A673 (cell line): ENCODE measurements at regions of chr6 and their contacts with region 1.

Region 1: GRCh38 chr6:32993363-32993973 is 15.9 kb downstream of the HLA-DOA start:
- DNase-seq: no peak
- H3K4me3 ChIP-seq: no peak overlapping the region
- H3K27ac ChIP-seq: no peak overlapping the region
- H3K4me1 ChIP-seq: no peaks in the 10 kb centered on the region
- H3K27me3 ChIP-seq: peaks cover 10% of the 10 kb centered on the region
- CTCF ChIP-seq: no peak

Region 2: GRCh38 chr6:33241968-33242367 is 248.5 kb after region 1 on chr6:
- CTCF ChIA-PET with region 1: no interaction called
- POLR2A ChIA-PET with region 1: interaction called, 13 read pairs
- intact Hi-C with region 1: no loop called
- DNase-seq: no peak
- H3K4me3 ChIP-seq: no peak overlapping the region
- H3K27ac ChIP-seq: no peak overlapping the region
- H3K4me1 ChIP-seq: no peaks in the 10 kb centered on the region
- H3K27me3 ChIP-seq: no peaks in the 10 kb centered on the region
- CTCF ChIP-seq: no peak